ENCODE measurements at regions of chr9 and their contacts with region 1.

Region 1: DNA sequence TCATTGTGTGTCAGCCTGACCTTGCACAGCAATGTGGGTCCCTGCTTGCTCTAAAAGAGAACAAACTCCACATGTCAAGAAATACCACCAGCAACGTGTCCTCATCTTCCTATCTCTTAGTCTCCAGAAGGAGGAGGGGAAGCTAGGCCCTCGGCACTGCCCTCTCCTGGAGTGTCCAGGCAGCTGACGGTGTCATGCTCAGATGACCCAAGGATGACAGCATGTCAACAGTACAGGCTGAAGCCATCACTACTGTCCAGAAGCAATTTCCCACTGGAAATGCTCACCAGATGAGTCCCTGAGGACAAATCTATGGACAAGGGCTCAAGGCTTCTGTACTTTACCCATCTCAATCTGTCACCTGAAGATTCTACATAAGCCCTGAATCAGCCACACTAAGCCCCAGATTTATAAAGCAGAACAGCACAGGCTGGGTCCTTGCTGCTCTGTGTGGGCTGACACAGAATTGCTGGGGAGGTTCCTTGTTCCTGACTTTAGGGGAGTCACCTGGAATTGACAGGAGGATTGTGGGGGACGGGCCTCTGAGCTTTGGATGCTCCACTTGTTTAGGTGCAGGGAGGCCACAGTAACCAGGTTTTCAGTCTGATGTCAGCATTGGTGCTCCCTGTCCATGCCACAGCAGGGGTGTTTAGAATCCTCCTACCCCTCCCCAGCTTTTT is 210.2 kb downstream of the DAB2IP start:
- DNase-seq: peak in 1 of 2 experiments; percentile 28
- H3K4me3 ChIP-seq: no peak overlapping the region
- H3K27ac ChIP-seq: no peak overlapping the region
- H3K4me1 ChIP-seq: no peaks in the 10 kb centered on the region
- H3K27me3 ChIP-seq: no peaks in the 10 kb centered on the region
- CTCF ChIP-seq: peak; percentile 61

Region 2: GRCh38 chr9:121972501-121972981 is 110.9 kb after region 1 on chr9:
- CTCF ChIA-PET with region 1: no interaction called
- POLR2A ChIA-PET with region 1: no interaction called
- intact Hi-C with region 1: loop called (anchors 10 kb)
- DNase-seq: peak; percentile 90 to 97
- H3K4me3 ChIP-seq: no peak overlapping the region
- H3K27ac ChIP-seq: peak overlapping the region; percentile 60
- H3K4me1 ChIP-seq: peaks cover 27% of the 10 kb centered on the region
- H3K27me3 ChIP-seq: no peaks in the 10 kb centered on the region
- CTCF ChIP-seq: no peak

Measured in PC-9 (cell line).